AG04450 (cell line): ENCODE measurements at regions of chr3 and their contacts with region 1.

Region 1: GRCh38 chr3:58013973-58014649 is 5.9 kb downstream of the FLNB start:
- DNase-seq: peak; percentile 76
- H3K4me3 ChIP-seq: peak overlapping the region; percentile 18; the same call in 1 of the 2 replicates
- H3K27ac ChIP-seq: peak overlapping the region; percentile 68
- H3K27me3 ChIP-seq: no peaks in the 10 kb centered on the region
- CTCF ChIP-seq: no peak

Region 2: DNA sequence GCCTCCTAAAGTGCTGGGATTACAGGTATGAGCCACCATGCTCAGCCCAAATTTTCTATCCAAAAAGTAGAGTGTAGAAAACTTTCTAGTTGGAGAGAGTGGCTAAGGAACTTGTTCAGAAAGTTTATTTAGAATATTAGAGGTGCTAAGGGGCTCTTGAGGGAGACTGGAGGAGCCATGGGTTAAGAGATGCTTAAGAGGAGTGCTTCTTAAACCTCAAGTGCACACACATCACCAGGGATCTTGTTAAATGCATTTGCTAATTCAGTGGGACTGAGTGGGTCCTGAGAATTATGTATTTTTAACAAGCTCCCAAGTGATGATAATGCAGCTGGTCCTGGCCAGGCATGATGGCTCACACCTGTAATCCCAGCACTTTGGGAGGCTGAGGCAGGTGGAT is 287.7 kb before region 1 on chr3:
- CTCF ChIA-PET with region 1: no interaction called
- POLR2A ChIA-PET with region 1: no interaction called
- DNase-seq: no peak
- H3K4me3 ChIP-seq: no peak overlapping the region
- H3K27ac ChIP-seq: no peak overlapping the region
- H3K27me3 ChIP-seq: peaks cover 2% of the 10 kb centered on the region
- CTCF ChIP-seq: no peak

Region 3: GRCh38 chr3:58000306-58001083 is 13.6 kb before region 1 on chr3:
- CTCF ChIA-PET with region 1: no interaction called
- POLR2A ChIA-PET with region 1: interaction called, 12 read pairs
- DNase-seq: no peak
- H3K4me3 ChIP-seq: no peak overlapping the region
- H3K27ac ChIP-seq: no peak overlapping the region
- H3K27me3 ChIP-seq: no peaks in the 10 kb centered on the region
- CTCF ChIP-seq: no peak

Region 4: GRCh38 chr3:58154626-58155449 is 140.7 kb after region 1 on chr3:
- CTCF ChIA-PET with region 1: no interaction called
- POLR2A ChIA-PET with region 1: no interaction called
- DNase-seq: no peak
- H3K4me3 ChIP-seq: no peak overlapping the region
- H3K27ac ChIP-seq: peak overlapping the region; percentile 21
- H3K27me3 ChIP-seq: no peaks in the 10 kb centered on the region
- CTCF ChIP-seq: no peak